ENCODE measurements at regions of chr1 and their contacts with region 1.

Region 1: DNA sequence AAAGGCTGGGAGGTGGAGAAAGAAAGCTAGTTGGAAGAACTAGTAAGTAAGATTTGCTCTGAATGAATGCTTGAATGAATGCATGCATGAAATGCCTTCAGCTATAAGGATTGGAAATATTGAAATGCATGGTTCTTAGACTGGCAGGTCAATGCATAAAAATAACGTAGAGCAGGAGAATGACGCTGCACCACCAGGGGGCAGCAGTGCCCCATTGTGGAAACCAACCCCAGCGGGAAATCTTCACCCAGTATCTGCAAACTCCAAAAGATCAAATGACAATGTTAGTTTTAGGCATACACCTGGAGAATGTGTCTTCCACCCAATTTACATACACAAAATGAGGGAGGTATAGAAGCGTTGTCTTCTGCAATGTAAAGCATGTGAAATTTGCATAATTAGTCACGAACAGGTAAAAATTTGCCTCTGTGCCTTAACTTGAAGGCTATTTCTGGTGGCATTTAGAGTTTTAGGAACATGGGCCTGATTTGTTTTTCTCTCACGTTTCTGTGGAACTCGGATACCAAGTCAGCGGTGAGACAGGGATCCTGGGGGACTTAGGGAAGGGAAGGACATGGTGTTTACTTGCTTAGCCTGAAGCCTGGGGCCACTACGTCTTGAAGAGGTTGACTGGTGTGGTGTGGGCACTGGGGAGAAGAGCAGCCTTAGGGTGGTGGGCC is 78.6 kb downstream of the HHAT start:
- DNase-seq: no peak
- H3K4me3 ChIP-seq: no peak overlapping the region
- H3K27me3 ChIP-seq: no peaks in the 10 kb centered on the region; the same call in 1 of the 2 replicates
- CTCF ChIP-seq: peak; percentile 96

Region 2: GRCh38 chr1:210143465-210144062 is 263.8 kb before region 1 on chr1:
- CTCF ChIA-PET with region 1: interaction called, 18 read pairs
- POLR2A ChIA-PET with region 1: no interaction called
- DNase-seq: peak; percentile 37
- H3K4me3 ChIP-seq: no peak overlapping the region
- H3K27me3 ChIP-seq: no peaks in the 10 kb centered on the region
- CTCF ChIP-seq: peak; percentile 54

Region 3: DNA sequence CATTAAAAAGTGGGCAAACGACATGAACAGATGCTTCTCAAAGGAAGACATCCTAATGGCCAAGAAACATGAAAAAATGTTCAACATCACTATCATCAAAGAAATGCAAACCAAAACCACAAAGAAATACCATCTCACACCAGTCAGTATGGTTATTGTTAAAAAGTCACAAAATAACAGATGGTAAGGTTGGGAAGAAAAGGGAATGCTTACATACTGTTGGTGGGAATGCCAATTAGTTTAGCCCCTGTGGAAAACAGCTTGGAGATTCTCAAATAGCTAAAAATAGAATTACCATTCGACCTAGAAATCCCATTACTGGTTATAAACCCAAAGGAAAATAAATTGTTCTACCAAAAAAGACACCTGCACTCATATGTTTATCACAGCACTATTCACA is 357.2 kb after region 1 on chr1:
- CTCF ChIA-PET with region 1: no interaction called
- POLR2A ChIA-PET with region 1: interaction called, 16 read pairs
- DNase-seq: peak; percentile 59
- H3K4me3 ChIP-seq: no peak overlapping the region
- H3K27me3 ChIP-seq: no peaks in the 10 kb centered on the region
- CTCF ChIP-seq: no peak

Region 4: GRCh38 chr1:210898473-210898872 is 491.1 kb after region 1 on chr1:
- CTCF ChIA-PET with region 1: no interaction called
- POLR2A ChIA-PET with region 1: no interaction called
- DNase-seq: no peak
- H3K4me3 ChIP-seq: no peak overlapping the region
- H3K27me3 ChIP-seq: no peaks in the 10 kb centered on the region
- CTCF ChIP-seq: no peak

Measured in BJ (cell line).